BJ (cell line): ENCODE measurements at regions of chr5 and their contacts with region 1.

Region 1: DNA sequence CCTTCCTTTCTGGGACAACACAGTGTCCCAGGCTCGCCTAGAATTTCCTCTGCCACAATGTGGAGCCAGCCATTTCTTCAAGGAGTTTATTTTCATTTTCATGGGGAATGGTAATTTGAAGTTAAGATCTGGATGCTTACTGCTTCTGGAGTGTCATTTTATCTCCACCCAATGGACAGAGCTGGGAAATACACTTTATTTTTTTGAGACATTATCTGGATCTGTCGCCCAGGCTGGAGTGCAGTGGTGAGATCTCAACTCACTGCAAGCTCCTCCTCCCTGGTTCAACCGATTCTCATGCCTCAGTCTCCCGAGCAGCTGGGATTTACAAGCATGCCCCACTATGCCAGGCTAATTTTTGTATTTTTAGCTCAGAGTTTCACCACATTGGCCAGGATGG is 12.7 kb upstream of the THG1L start:
- DNase-seq: peak; percentile 47
- H3K4me3 ChIP-seq: no peak overlapping the region
- H3K27me3 ChIP-seq: no peaks in the 10 kb centered on the region
- CTCF ChIP-seq: peak; percentile 62

Region 2: DNA sequence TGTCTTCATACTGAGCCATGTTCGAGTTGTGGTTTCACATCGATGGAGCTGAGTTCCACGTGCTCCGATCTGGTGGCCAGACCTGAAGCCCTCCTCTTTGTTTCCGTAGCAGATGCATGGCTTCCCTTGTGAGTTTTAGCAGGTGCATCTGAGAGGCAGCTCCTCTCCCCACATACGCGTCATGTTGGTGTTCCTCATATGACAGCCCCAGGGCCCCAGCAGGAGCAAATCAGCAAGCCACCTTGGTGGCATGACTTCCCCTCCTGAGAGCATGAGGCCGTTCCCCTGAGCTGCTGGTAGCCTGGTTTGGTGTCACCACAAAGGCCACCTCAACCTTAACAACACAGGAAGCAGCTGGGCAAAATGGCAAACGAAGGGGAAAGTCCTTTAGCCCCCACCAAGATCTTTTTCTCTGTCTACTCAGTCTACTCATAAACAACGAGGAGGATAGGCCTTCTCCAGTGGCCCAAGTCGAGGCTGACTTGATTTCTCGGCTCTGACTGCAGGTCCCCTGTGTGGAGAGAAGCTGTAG is 446.7 kb before region 1 on chr5:
- CTCF ChIA-PET with region 1: no interaction called
- POLR2A ChIA-PET with region 1: no interaction called
- DNase-seq: no peak
- H3K4me3 ChIP-seq: no peak overlapping the region
- H3K27me3 ChIP-seq: no peaks in the 10 kb centered on the region
- CTCF ChIP-seq: no peak

Region 3: DNA sequence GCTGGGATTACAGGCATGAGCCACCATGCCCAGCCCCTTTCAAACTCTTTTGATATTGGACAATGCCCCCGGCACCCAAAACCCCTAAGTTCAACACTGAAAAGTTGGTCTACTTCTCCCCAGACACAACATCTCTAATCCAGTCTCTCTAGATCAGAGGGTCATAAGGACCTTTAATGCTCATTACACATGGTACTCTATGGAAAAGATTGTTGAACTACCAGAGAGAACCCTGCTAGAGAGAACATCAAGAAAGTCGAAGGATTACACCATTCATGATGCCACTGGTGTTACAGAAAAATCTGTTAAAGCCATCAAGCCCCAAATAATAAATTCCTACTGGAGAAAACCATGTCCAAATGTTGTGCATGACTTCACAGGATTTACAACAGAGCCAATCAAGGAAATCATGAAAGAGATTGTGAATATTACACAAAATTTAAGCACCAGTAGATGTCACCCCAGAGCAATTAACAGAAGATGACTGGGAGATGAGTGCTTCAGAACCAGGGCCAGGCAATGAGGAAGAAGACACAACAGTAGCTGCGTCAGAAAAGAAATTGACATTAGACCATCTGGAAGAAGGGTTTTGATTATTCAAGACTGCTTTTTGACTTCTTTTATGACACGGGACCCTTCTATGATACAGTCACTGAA is 286.8 kb before region 1 on chr5:
- CTCF ChIA-PET with region 1: interaction called, 15 read pairs
- POLR2A ChIA-PET with region 1: no interaction called
- DNase-seq: peak; percentile 31
- H3K4me3 ChIP-seq: no peak overlapping the region
- H3K27me3 ChIP-seq: no peaks in the 10 kb centered on the region
- CTCF ChIP-seq: peak; percentile 49

Region 4: GRCh38 chr5:157476702-157477408 is 241.7 kb before region 1 on chr5:
- CTCF ChIA-PET with region 1: interaction called, 12 read pairs
- POLR2A ChIA-PET with region 1: no interaction called
- DNase-seq: peak; percentile 11
- H3K4me3 ChIP-seq: no peak overlapping the region
- H3K27me3 ChIP-seq: no peaks in the 10 kb centered on the region
- CTCF ChIP-seq: peak; percentile 85

Region 5: GRCh38 chr5:157670662-157671591 is 47.6 kb before region 1 on chr5 and contains the start of gene C5orf52:
- CTCF ChIA-PET with region 1: interaction called, 26 read pairs
- POLR2A ChIA-PET with region 1: no interaction called
- DNase-seq: no peak
- H3K4me3 ChIP-seq: peak within 1 kb of the TSS; percentile 70
- H3K27me3 ChIP-seq: no peaks in the 10 kb centered on the region; the same call in none of the 2 replicates
- CTCF ChIP-seq: no peak
- polyA plus RNA-seq, gene C5orf52: not detected in 2 replicates

Region 6: GRCh38 chr5:157731272-157732129 is 13.0 kb after region 1 on chr5 and contains the start of gene THG1L:
- CTCF ChIA-PET with region 1: interaction called, 10 read pairs
- POLR2A ChIA-PET with region 1: no interaction called
- DNase-seq: peak; percentile 93
- H3K4me3 ChIP-seq: peak within 1 kb of the TSS; percentile 61
- H3K27me3 ChIP-seq: no peaks in the 10 kb centered on the region
- CTCF ChIP-seq: no peak
- polyA plus RNA-seq, gene THG1L: 22.7 and 29.5 TPM in 2 replicates